ENCODE measurements at regions of chr12 and their contacts with region 1.

Region 1: DNA sequence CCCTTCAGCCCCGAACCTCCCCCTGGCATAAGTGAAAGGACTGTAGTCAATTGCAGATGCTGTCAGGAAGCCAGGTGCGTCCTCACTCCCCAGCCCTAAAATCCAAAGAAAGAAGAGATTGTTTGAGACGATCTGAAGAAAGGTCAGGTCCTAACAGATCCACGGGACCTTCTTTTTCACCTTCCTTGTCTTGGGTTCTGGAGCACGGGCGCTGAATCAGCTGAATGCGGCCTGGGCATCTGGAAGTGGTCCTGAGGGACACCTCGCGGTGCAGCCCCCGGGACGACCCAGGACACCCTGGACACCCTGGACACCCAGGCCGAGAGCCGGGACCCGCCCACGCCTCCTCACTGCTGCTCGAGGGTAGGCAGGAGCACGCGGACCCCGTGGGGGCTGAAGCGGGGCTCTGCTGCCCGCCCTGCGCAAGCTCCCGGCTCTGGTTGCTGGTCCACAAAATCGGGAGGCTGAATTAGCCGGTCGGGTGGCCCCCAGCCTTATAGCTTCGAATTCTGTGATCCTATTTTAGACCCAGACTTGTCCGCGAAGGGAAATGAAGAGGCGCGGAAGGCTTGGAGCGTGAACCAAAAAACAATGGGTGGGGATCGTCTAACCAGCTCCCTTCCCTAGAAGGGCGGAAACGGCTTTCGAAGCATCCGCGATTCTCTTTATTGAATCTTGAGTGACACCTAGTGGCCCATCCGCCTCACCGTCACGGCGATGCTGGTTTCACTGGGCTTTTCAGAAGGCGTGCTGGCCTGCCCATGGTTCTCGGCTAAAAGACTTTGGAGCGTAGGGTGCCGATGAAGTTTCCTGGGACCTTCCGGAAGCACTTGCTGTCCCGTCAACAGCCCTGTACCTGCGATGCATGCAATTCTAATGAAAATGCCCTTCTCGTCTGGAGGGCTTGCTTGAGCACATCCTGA is 46.4 kb upstream of the PLXNC1 start:
- DNase-seq: peak; percentile 82 to 96 (median 90)
- H3K4me3 ChIP-seq: peak overlapping the region in 3 of 4 donors; percentile 35 to 66 (median 36)
- H3K27ac ChIP-seq: peak overlapping the region in 3 of 5 donors; percentile 15 to 30 (median 18)
- H3K4me1 ChIP-seq: peaks cover 6 to 20% of the 10 kb centered on the region in 2 donors
- H3K27me3 ChIP-seq: no peaks in the 10 kb centered on the region
- CTCF ChIP-seq: peak; percentile 63 to 90 (median 76)
- POLR2A ChIP-seq: no peak

Region 2: DNA sequence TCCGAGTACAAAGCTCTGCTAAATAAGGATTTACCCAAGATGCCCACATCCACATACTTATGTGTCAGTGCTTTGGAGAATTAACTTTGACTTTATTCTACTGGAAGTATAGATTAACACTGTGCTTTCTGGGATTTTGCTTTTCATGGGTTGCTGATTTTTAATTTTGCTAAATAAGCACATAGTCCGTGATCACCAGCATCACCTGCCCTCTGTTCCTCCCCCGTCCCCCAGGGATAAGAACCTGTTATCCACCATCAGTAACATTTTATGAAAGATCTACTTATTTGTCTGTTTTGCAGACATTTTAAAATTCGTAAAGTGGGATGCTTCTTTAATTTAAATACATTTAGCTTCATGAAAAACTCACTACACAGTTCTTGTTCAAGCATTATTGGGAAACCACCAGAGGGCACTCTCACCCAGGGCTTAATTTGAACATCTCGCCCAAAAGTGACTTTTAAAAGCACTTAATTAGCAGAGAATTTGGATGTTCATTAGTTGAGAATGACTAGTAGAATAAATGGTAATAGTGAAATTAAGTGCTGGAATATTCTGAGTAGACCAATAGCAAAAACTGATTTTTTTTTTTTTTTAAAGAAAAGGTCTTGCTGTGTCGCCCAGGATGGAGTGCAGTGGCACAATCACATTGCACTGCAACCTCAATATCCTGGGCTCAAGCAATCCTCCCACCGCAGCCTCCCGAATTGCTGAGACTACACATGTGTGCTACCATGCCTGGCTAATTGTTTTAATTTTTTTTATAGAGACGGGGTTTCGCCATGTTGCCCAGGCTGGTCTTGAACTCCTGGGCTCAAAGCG is 599.0 kb before region 1 on chr12:
- intact Hi-C with region 1: loop called (anchors 5 kb)
- DNase-seq: peak in 6 of 7 donors; percentile 28 to 75 (median 60)
- H3K4me3 ChIP-seq: no peak overlapping the region
- H3K27ac ChIP-seq: no peak overlapping the region
- H3K4me1 ChIP-seq: no peaks in the 10 kb centered on the region
- H3K27me3 ChIP-seq: no peaks in the 10 kb centered on the region
- CTCF ChIP-seq: peak; percentile 71 to 88 (median 76)
- POLR2A ChIP-seq: no peak

Region 3: GRCh38 chr12:93751864-93752610 is 350.0 kb before region 1 on chr12:
- intact Hi-C with region 1: loop called in 1 of 2 experiments (anchors 10 kb)
- DNase-seq: no peak
- H3K4me3 ChIP-seq: no peak overlapping the region
- H3K27ac ChIP-seq: no peak overlapping the region
- H3K4me1 ChIP-seq: peaks cover 6 to 21% of the 10 kb centered on the region in 2 donors
- H3K27me3 ChIP-seq: no peaks in the 10 kb centered on the region
- CTCF ChIP-seq: no peak
- POLR2A ChIP-seq: no peak